ENCODE measurements at regions of chr20 and their contacts with region 1.

Region 1: DNA sequence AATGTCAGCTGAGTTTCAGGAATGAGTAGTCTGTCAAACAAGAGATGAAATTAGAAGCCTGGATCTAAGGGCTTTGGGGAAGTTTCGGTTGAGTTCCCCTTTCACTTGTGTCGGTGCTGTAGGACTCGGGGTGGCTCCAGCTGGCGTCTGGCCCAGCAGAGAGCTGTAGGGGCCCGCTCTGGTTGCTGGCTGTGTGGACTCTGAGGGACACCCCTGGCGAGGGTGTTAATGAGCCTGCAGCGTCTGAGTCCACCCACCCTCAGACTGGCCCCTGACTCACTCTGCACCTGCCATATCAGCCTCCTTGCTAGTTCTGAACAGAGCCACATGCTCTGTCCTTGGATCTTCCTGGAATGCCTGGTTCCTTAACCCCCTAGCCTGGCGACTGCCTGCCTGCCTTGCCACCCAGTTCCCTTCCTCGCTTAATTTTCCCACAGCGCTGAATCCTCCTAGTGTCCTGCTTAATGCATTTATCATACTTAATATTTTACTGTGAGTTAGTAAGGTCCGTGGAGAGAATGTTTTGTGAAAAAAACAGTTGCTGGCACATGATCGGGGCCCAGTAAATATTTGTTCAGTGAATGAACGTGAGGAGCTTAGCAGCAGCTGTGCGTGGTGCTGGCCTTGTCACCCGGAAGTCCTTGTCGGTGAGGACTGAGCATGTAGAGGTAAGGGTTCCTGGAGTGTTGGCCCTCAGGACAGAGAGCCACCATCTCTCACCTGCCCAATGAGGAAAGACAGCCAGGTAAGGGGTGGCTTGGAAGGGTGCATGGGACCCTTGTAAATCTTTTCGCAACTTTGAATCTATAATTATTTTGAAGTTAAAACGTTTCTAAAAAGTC is 1.6 kb downstream of the DNAJC5 start:
- DNase-seq: peak in 3 of 10 donors; percentile 16 to 26 (median 18)
- ATAC-seq: peak; percentile 5 to 12
- H3K4me3 Mint-ChIP-seq: peak overlapping the region; percentile 86 to 98 (median 92)
- H3K27ac Mint-ChIP-seq: peak overlapping the region; percentile 89 to 99 (median 96)
- H3K4me1 Mint-ChIP-seq: peaks cover 31 to 64% (median 52%) of the 10 kb centered on the region in 4 donors
- H3K27me3 Mint-ChIP-seq: no peaks in the 10 kb centered on the region

Region 2: DNA sequence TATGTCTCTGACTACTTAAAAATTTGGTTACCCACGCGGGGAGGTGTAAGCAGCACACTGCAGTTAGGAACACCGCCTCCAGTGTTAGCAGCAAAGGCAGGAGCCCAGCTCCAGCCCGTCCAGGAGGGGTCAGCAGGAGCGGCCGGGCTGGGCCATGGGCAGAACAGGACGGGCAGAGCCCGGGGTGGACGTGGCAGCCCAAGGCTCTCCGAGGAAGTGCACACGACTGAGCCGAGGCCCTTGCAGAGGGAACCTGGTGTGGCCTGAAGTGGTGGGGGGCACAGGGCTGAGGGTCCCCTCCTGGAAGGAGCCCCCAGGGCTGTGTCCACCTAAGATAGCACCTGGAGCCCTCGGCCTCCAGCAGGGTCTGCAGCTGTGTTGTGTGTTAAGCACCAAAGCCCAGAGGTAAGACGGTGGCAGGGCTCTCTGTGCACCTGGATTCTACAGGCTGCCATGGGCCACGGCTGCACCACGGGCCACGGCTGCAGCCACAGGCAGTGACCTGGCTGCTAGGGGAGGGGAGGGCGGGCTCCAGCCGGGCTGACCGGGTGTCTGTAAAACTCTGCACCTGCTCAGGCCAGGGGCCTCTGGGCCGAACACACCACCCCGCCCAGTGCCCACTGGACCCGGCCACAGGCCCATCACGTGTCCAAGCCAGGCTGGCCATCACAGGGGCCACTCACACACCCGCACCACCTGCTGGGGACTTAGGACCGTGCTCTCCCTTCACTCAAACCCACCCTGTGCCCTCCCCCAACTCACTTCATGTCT is 150.3 kb before region 1 on chr20:
- POLR2A ChIA-PET with region 1: no interaction called
- DNase-seq: no peak
- ATAC-seq: no peak
- H3K4me3 Mint-ChIP-seq: peak overlapping the region in 1 of 10 donors; percentile 65
- H3K27ac Mint-ChIP-seq: peak overlapping the region in 4 of 10 donors; percentile 24 to 65 (median 62)
- H3K4me1 Mint-ChIP-seq: peaks cover 8 to 33% (median 23%) of the 10 kb centered on the region in 4 donors
- H3K27me3 Mint-ChIP-seq: no peaks in the 10 kb centered on the region

Region 3: GRCh38 chr20:63908008-63908624 is 11.6 kb after region 1 on chr20:
- POLR2A ChIA-PET with region 1: interaction called, 11 read pairs
- DNase-seq: no peak
- ATAC-seq: no peak
- H3K4me3 Mint-ChIP-seq: peak overlapping the region in 1 of 10 donors; percentile 45
- H3K27ac Mint-ChIP-seq: peak overlapping the region in 5 of 10 donors; percentile 44 to 85 (median 73)
- H3K4me1 Mint-ChIP-seq: peaks cover 29 to 77% (median 53%) of the 10 kb centered on the region in 4 donors
- H3K27me3 Mint-ChIP-seq: no peaks in the 10 kb centered on the region